ENCODE measurements at regions of chr12 and their contacts with region 1.

Region 1: GRCh38 chr12:115752913-115753726 is 524.4 kb downstream of the MED13L start:
- DNase-seq: peak in 2 of 3 donors; percentile 10 to 42
- ATAC-seq: peak; percentile 90 to 94
- H3K4me3 ChIP-seq: no peak overlapping the region
- H3K27ac ChIP-seq: no peak overlapping the region
- H3K4me1 ChIP-seq: no peaks in the 10 kb centered on the region
- H3K27me3 ChIP-seq: peaks cover 5% of the 10 kb centered on the region

Region 2: GRCh38 chr12:114662512-114663177 is 1090.5 kb before region 1 on chr12:
- intact Hi-C with region 1: loop called (anchors 2 to 5 kb)
- DNase-seq: peak; percentile 73 to 91 (median 83)
- ATAC-seq: peak; percentile 38 to 43
- H3K4me3 ChIP-seq: no peak overlapping the region
- H3K27ac ChIP-seq: no peak overlapping the region
- H3K4me1 ChIP-seq: no peaks in the 10 kb centered on the region
- H3K27me3 ChIP-seq: no peaks in the 10 kb centered on the region

Region 3: GRCh38 chr12:114668151-114668885 is 1084.8 kb before region 1 on chr12:
- intact Hi-C with region 1: loop called (anchors 2 to 5 kb)
- DNase-seq: peak; percentile 81 to 87 (median 86)
- ATAC-seq: peak; percentile 88 to 91
- H3K4me3 ChIP-seq: peak overlapping the region; percentile 64
- H3K27ac ChIP-seq: no peak overlapping the region
- H3K4me1 ChIP-seq: peaks cover 3% of the 10 kb centered on the region
- H3K27me3 ChIP-seq: no peaks in the 10 kb centered on the region

Region 4: GRCh38 chr12:115623764-115624334 is 129.3 kb before region 1 on chr12:
- intact Hi-C with region 1: loop called in 1 of 4 experiments (anchors 10 kb)
- DNase-seq: peak; percentile 57 to 84 (median 63)
- ATAC-seq: peak; percentile 60 to 83
- H3K4me3 ChIP-seq: no peak overlapping the region
- H3K27ac ChIP-seq: peak overlapping the region; percentile 31
- H3K4me1 ChIP-seq: no peaks in the 10 kb centered on the region
- H3K27me3 ChIP-seq: no peaks in the 10 kb centered on the region

Region 5: GRCh38 chr12:115947697-115948064 is 194.6 kb after region 1 on chr12:
- intact Hi-C with region 1: no loop called
- DNase-seq: no peak
- ATAC-seq: no peak
- H3K4me3 ChIP-seq: no peak overlapping the region
- H3K27ac ChIP-seq: no peak overlapping the region
- H3K4me1 ChIP-seq: peaks cover 2% of the 10 kb centered on the region
- H3K27me3 ChIP-seq: no peaks in the 10 kb centered on the region